Heart left ventricle (tissue), 16 donors: ENCODE measurements at regions of chr4 and their contacts with region 1.

Region 1: DNA sequence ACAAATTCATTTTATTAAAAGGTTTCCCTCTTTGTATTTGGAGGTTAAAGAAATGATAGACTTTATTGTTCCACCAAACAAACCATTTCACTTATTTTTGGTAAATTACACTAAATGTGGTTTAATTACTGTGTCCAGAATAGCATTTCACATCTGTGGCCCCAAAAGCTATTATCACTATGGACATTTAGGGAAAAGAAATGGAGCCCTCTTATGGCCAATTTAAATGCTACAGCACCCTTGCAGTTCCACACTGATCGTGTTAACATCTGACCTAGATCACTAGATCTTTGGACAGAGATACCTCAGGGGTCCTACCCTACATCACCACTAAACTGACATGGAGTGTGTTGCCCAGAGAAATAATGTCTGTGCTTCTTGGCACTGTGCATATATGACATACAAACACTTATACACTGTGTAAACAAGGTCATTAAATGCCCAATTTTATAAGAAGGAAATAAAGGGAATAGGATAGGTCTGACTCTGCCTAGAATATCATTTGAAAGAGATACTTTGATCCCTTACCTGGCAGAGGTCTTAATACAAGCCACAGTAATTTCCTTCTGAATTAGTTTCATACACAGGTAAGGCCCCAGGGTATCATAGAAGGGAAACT is 163.9 kb downstream of the KDR start:
- DNase-seq: no peak
- ATAC-seq: peak in 2 of 4 donors; percentile 18 to 47
- H3K4me3 ChIP-seq: no peak overlapping the region
- H3K27ac ChIP-seq: no peak overlapping the region
- H3K4me1 ChIP-seq: no peaks in the 10 kb centered on the region
- H3K27me3 ChIP-seq: no peaks in the 10 kb centered on the region
- CTCF ChIP-seq: peak; percentile 46 to 71 (median 62)
- POLR2A ChIP-seq: no peak

Region 2: DNA sequence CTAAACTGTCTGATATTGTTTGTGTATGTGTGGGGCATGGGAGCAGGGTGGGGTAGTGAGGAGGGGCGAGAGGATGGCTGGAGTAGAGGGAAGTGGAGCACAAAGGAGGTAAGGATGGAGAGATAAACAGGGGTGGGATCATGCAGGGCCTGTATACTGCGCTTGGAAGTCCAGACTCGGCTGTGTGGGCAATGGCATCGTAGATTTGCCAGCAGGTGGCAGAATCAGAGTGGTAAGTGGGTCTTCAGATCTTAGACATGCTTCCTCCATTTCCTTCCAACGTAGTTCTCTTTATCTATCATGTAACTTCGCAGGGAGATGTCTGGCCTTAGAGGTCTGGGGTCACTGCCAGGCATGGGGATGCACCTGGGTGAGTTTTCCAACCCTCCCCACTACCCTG is 576.9 kb before region 1 on chr4:
- intact Hi-C with region 1: loop called in 1 of 10 experiments (anchors 5 kb)
- DNase-seq: peak in 1 of 5 donors; percentile 17
- ATAC-seq: peak in 2 of 4 donors; percentile 45 to 64
- H3K4me3 ChIP-seq: no peak overlapping the region
- H3K27ac ChIP-seq: no peak overlapping the region
- H3K4me1 ChIP-seq: no peaks in the 10 kb centered on the region
- H3K27me3 ChIP-seq: no peaks in the 10 kb centered on the region
- CTCF ChIP-seq: peak in 11 of 12 donors; percentile 9 to 60 (median 40)
- POLR2A ChIP-seq: no peak

Region 3: GRCh38 chr4:54440394-54441136 is 520.9 kb before region 1 on chr4:
- intact Hi-C with region 1: loop called in 2 of 10 experiments (anchors 5 to 10 kb)
- DNase-seq: no peak
- ATAC-seq: peak in 1 of 4 donors; percentile 57
- H3K4me3 ChIP-seq: peak overlapping the region in 9 of 12 donors; percentile 4 to 48 (median 27)
- H3K27ac ChIP-seq: peak overlapping the region in 9 of 12 donors; percentile 2 to 54 (median 33)
- H3K4me1 ChIP-seq: peaks cover 0 to 7% (median 0%) of the 10 kb centered on the region in 12 donors
- H3K27me3 ChIP-seq: no peaks in the 10 kb centered on the region
- CTCF ChIP-seq: peak; percentile 43 to 75 (median 66)
- POLR2A ChIP-seq: no peak

Region 4: GRCh38 chr4:54658252-54659093 is 303.0 kb before region 1 on chr4:
- intact Hi-C with region 1: loop called in 2 of 10 experiments (anchors 10 kb)
- DNase-seq: peak; percentile 46 to 75 (median 53)
- ATAC-seq: peak; percentile 34 to 84 (median 82)
- H3K4me3 ChIP-seq: peak overlapping the region; percentile 27 to 75 (median 62)
- H3K27ac ChIP-seq: peak overlapping the region in 8 of 12 donors; percentile 22 to 60 (median 34)
- H3K4me1 ChIP-seq: peaks cover 0 to 33% (median 28%) of the 10 kb centered on the region in 12 donors
- H3K27me3 ChIP-seq: peaks cover 0 to 38% (median 0%) of the 10 kb centered on the region in 9 donors
- CTCF ChIP-seq: peak in 10 of 12 donors; percentile 17 to 60 (median 32)
- POLR2A ChIP-seq: no peak

Region 5: DNA sequence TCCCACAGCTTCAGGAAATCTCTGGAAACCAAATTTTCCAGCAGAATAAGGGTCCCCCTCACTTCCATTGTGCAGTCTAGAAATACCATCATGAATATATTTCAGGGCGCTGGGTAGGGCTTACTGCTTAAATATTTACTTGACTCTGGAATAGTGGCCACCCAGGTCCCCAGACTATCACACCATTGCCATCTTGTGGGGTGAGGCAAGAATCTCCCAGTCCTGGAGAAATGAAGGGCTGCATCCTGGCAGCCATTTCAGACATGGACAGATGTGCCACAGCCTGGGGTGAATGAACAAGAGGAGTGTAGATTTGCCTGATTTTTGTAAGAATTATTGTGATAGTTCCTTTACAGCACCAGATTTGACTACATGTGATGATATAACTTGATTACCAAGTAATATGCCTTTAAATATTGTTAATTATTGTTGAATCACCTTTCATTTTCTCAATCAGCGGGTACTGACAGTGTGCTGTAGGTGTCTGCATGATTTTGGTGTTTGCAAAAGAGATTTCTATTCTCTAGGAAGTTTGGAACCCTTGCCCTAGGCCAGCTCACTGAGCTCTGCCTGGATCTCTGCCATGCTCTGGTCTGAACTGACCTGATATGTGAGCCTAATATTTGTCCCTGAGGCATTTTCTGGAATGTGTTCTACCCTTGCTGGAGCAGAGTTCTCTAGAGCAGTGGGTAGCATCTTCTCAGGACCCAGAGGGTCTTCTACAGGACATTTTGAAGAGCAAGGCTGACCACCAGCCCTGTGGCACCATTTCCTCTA is 120.3 kb before region 1 on chr4:
- intact Hi-C with region 1: loop called in 1 of 10 experiments (anchors 10 kb)
- DNase-seq: peak in 3 of 5 donors; percentile 21 to 37 (median 21)
- ATAC-seq: peak in 3 of 4 donors; percentile 69 to 86 (median 80)
- H3K4me3 ChIP-seq: no peak overlapping the region
- H3K27ac ChIP-seq: no peak overlapping the region
- H3K4me1 ChIP-seq: peaks cover 0 to 16% (median 0%) of the 10 kb centered on the region in 12 donors
- H3K27me3 ChIP-seq: no peaks in the 10 kb centered on the region
- CTCF ChIP-seq: peak in 11 of 12 donors; percentile 22 to 51 (median 36)
- POLR2A ChIP-seq: no peak